MCF 10A (cell line): ENCODE measurements at regions of chr10 and their contacts with region 1.

Region 1: DNA sequence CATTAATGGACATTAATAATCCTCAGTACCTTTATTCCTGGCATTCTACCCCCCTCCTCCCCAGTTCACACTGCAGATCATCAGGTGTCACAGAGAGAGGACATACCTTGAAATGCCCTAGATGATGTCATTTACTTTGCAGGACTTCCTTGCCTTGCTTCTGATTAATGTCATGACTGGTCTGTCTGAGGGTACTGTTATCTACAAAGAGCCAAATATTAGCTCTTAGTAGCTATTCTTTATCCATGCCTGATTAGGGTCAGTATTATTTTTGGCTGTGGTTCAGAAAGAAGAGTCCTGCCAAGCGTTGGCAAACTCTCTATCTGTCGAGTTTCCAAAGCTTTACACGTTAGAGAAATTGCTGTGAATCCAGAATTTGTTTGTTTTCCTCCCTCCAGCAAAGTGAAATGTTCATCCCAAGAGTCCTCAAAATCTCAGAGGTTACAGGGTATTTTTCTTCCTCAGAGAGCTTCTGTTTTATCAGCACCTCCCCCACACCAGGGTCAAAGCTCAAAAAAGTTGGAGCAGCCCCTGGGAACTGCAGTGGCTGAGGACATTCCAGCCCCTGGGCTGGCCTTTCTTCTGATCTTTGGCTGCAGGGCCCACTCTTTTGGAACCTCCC is 12.6 kb downstream of the SCD start:
- DNase-seq: no peak
- H3K4me3 Mint-ChIP-seq: no peak overlapping the region
- H3K27ac Mint-ChIP-seq: peak overlapping the region; percentile 43
- H3K4me1 Mint-ChIP-seq: peaks cover 69% of the 10 kb centered on the region
- H3K27me3 Mint-ChIP-seq: no peaks in the 10 kb centered on the region
- CTCF ChIP-seq: no peak

Region 2: DNA sequence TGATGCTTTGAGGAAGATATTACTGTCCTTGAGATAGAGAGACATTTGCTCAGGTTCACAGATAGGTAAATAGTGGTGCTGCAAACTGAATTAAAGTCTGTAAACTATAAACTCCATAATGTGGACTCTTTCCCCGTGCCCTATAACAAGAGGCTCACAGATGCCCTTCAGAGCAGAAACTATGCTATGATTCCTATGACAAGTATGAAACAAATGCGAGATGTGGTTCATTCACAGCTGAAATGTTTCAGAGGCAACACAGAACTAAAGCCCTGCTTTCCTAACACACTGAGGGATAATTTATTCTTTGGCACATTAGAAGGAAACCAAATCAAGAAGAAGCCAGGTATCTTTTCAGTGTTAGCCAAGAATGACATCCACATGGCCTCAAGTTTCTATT is 143.6 kb before region 1 on chr10:
- CTCF ChIA-PET with region 1: no interaction called
- POLR2A ChIA-PET with region 1: no interaction called
- intact Hi-C with region 1: no loop called
- DNase-seq: no peak
- H3K4me3 Mint-ChIP-seq: no peak overlapping the region
- H3K27ac Mint-ChIP-seq: no peak overlapping the region
- H3K4me1 Mint-ChIP-seq: no peaks in the 10 kb centered on the region
- H3K27me3 Mint-ChIP-seq: no peaks in the 10 kb centered on the region
- CTCF ChIP-seq: no peak

Region 3: DNA sequence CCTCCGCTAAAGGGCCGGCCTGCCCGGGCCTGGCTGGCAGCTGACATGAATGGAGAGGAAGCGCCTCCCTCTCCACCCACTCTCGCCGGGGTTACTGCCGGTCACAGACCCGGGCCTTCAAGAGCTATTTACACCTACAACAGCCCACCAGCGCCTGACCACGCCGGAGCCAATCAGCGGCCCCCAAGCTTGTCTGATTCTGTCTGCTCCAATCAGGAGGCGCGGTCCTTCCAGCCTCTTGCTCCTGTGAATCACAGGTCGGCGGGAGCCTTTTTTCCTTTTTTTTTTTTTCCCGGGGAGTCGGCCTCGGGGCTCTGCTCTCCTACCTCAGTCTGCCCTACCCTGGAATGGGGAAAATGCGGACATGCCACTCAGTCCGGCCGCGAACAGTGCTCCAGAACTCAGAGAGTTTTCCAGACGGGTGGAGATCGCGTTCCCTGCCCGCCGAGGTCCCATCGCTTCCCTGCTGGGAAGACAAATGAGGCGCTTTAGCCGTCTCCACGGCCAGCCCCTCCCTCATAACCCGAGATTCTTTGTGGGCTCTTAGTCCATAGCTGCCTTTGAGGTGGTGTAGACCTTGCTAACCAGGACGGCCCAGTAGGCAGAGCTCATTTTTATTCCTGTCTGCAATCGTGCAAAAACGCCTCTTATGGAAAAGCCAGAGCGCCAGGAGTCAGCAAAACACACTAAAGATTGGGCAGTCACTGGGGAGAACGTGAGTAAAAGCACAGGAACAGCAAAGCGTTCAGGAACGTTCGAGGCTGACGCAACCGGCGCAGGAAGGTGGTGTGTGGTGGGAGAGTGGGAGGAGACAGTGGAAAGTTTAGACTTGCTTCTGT is 13.9 kb after region 1 on chr10:
- CTCF ChIA-PET with region 1: interaction called, 6 read pairs
- POLR2A ChIA-PET with region 1: interaction called, 493 read pairs
- intact Hi-C with region 1: loop called (anchors 1 kb)
- DNase-seq: peak; percentile 100
- H3K4me3 Mint-ChIP-seq: no peak overlapping the region
- H3K27ac Mint-ChIP-seq: no peak overlapping the region
- H3K4me1 Mint-ChIP-seq: peaks cover 14% of the 10 kb centered on the region
- H3K27me3 Mint-ChIP-seq: no peaks in the 10 kb centered on the region
- CTCF ChIP-seq: no peak

Region 4: GRCh38 chr10:100403734-100404133 is 44.1 kb after region 1 on chr10:
- CTCF ChIA-PET with region 1: no interaction called
- POLR2A ChIA-PET with region 1: no interaction called
- intact Hi-C with region 1: no loop called
- DNase-seq: peak; percentile 16
- H3K4me3 Mint-ChIP-seq: no peak overlapping the region
- H3K27ac Mint-ChIP-seq: no peak overlapping the region
- H3K4me1 Mint-ChIP-seq: no peaks in the 10 kb centered on the region
- H3K27me3 Mint-ChIP-seq: no peaks in the 10 kb centered on the region
- CTCF ChIP-seq: no peak